ENCODE measurements at regions of chr17 and their contacts with region 1.

Region 1: DNA sequence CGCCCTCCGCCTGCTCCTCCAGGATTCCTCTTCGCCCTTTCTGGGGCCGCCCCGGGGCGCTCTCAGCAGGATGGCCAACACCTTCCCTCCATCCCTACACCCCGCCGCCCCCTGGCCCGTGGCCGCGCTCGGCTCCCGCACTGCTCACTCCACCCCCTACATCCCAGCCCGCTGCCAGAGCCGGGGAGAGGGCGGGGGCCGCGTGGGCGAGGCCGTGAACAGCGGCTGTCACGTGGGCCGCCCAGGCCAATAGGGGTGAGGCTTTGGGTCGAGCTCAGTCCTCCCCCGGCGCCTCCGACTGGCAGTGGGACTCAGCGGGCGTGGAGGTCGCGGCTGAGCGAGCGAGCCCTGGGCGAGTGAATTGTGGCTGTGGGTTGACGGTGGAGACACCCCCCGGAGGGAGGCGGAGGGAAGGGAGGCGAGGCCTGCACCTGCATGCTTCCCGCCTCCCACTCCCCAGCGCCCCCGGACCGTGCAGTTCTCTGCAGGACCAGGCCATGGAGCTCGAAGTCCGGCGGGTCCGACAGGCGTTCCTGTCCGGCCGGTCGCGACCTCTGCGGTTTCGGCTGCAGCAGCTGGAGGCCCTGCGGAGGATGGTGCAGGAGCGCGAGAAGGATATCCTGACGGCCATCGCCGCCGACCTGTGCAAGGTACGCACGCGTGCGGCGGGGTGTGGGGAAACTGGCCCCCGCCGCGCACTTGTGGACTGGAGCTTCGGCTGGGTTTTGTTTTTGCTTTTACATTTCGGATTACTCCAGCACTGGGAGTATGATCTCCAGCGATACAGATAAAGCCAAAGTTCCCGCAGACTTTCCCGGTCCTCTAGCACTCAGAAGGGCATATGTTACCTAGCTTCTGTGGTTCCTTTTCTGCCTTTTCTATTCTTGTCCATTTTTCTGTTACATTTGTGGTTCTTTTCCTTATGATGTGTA is at the start of gene ALDH3A2:
- DNase-seq: peak; percentile 95
- H3K4me3 ChIP-seq: peak within 1 kb of the TSS; percentile 81
- H3K27ac ChIP-seq: peak within 1 kb of the TSS; percentile 53
- H3K4me1 ChIP-seq: peaks cover 32% of the 10 kb centered on the region
- CTCF ChIP-seq: no peak; the same call in 1 of the 2 replicates
- total RNA-seq, gene ALDH3A2: 28.9 and 29.7 TPM in 2 replicates

Region 2: DNA sequence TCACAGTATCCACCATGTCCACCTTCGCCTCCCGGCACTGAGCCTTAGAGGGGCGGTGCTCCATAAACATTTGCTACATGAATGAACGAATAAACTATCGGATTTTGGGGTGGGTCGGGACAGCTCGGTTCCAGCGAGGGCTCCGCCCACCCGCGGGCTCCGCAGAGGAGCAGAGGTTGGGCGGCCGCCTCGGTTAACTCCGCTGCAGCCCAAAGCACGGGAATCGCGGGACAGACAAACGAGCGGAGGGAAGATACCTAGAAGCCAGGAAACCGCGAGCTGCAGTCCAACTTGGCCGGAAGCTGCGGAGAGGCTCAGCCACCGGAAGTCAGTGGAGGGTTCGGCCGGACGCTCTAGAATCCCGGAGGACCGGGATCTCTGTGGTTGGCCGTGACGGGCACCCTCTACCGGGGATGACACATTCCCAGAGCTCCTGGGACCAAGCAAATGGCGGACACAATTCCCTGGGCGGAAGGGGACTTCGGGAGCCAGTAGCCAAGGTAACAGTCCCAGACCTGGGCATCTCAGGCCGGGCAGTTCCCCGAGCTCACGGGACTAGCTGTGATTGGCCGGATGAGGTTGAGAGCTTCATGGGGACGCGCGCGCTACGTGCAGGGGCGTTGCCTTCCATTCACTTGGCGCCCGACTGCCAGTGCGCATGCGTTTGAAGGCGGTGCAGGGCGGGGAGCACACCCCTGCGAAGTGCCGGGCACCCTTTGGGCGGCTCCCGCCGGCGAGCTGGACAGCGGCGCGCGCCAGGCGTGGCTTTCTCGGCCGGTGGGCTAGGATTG is 270.9 kb before region 1 on chr17:
- CTCF ChIA-PET with region 1: interaction called, 3 read pairs
- POLR2A ChIA-PET with region 1: interaction called, 4 read pairs
- intact Hi-C with region 1: loop called (anchors 10 kb)
- DNase-seq: peak; percentile 98
- H3K4me3 ChIP-seq: peak overlapping the region; percentile 84
- H3K27ac ChIP-seq: peak overlapping the region; percentile 70
- H3K4me1 ChIP-seq: peaks cover 22% of the 10 kb centered on the region
- CTCF ChIP-seq: no peak

Region 3: GRCh38 chr17:19507775-19508576 is 140.8 kb before region 1 on chr17:
- CTCF ChIA-PET with region 1: no interaction called
- POLR2A ChIA-PET with region 1: interaction called, 4 read pairs
- intact Hi-C with region 1: loop called (anchors 2 kb)
- DNase-seq: peak; percentile 76
- H3K4me3 ChIP-seq: peak overlapping the region; percentile 82
- H3K27ac ChIP-seq: peak overlapping the region; percentile 68
- H3K4me1 ChIP-seq: peaks cover 37% of the 10 kb centered on the region
- CTCF ChIP-seq: no peak

Region 4: DNA sequence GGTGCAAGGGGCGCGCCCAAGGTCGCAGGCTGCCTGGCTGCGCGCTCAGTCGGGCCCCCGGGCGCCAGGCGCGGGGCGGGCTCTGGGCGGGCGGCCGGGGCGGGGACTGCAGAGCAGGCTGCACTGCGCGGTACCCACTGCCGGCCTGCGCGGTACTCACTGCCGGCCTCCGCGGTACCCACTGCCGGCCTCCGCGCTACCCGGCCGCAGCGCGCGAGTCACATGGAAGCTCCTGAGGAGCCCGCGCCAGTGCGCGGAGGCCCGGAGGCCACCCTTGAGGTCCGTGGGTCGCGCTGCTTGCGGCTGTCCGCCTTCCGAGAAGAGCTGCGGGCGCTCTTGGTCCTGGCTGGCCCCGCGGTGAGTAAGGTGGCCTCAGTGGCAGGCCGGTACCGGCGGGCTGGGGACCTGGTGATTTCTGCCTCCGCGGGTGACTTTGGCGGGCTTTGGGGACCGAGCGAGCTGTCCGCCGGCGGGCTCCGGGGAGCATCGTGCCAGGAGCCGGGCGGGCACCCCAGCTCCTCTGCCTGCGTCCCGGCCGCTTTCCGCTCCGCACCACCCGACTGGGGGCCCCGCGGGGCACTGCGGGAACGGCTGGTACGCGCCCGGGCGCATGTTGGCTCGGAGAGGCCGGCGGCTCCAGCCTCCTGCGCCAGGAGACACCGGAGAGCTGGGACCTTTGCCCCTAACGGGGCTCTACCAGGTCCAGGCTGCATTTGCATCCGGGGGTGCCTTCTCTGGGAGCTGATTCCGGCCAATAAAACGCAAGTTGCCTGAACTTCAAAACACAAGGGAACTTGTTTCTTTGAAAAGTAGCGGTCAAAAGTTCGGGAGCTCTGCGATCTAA is 114.8 kb before region 1 on chr17 and contains the start of gene SLC47A1:
- CTCF ChIA-PET with region 1: no interaction called
- POLR2A ChIA-PET with region 1: no interaction called
- intact Hi-C with region 1: no loop called
- DNase-seq: no peak
- H3K4me3 ChIP-seq: no peak within 1 kb of the TSS
- H3K27ac ChIP-seq: no peak within 1 kb of the TSS
- H3K4me1 ChIP-seq: no peaks in the 10 kb centered on the region
- CTCF ChIP-seq: no peak
- total RNA-seq, gene SLC47A1: not detected in 2 replicates

Region 5: DNA sequence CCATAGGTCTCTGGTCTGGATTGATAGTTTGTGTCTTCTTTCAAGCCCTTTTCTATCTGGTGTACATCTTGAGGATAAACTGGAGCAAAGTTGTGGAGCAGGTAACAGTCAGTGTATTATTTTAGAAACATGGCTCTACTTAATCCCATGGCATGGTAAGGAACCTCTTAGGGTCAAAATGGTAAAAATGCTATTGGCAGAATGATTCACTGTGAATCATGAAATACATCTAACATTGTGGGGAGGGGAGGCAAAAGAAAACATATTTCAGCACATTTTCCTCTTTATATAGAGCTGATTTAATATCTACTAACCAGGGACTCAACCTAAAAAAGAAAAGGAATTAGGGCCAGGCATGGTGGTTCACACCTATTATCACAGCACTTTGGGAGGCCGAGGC is 18.1 kb before region 1 on chr17:
- CTCF ChIA-PET with region 1: no interaction called
- POLR2A ChIA-PET with region 1: no interaction called
- intact Hi-C with region 1: no loop called
- DNase-seq: no peak
- H3K4me3 ChIP-seq: no peak overlapping the region
- H3K27ac ChIP-seq: no peak overlapping the region
- H3K4me1 ChIP-seq: no peaks in the 10 kb centered on the region
- CTCF ChIP-seq: no peak

Region 6: GRCh38 chr17:19766422-19767270 is 117.9 kb after region 1 on chr17:
- CTCF ChIA-PET with region 1: interaction called, 5 read pairs
- POLR2A ChIA-PET with region 1: interaction called, 3 read pairs
- intact Hi-C with region 1: loop called (anchors 10 kb)
- DNase-seq: peak; percentile 80
- H3K4me3 ChIP-seq: no peak overlapping the region
- H3K27ac ChIP-seq: no peak overlapping the region
- H3K4me1 ChIP-seq: peaks cover 24% of the 10 kb centered on the region
- CTCF ChIP-seq: peak; percentile 97